ENCODE measurements at regions of chr4 and their contacts with region 1.

Region 1: GRCh38 chr4:75916091-75916661 is 13.9 kb upstream of the PPEF2 start:
- DNase-seq: peak in 4 of 5 donors; percentile 24 to 54 (median 30)
- H3K4me3 ChIP-seq: no peak overlapping the region
- H3K4me3 Mint-ChIP-seq: no peak overlapping the region
- H3K27ac ChIP-seq: no peak overlapping the region
- H3K27ac Mint-ChIP-seq: no peak overlapping the region
- H3K4me1 ChIP-seq: no peaks in the 10 kb centered on the region
- H3K4me1 Mint-ChIP-seq: no peaks in the 10 kb centered on the region
- H3K27me3 ChIP-seq: no peaks in the 10 kb centered on the region
- H3K27me3 Mint-ChIP-seq: no peaks in the 10 kb centered on the region

Region 2: DNA sequence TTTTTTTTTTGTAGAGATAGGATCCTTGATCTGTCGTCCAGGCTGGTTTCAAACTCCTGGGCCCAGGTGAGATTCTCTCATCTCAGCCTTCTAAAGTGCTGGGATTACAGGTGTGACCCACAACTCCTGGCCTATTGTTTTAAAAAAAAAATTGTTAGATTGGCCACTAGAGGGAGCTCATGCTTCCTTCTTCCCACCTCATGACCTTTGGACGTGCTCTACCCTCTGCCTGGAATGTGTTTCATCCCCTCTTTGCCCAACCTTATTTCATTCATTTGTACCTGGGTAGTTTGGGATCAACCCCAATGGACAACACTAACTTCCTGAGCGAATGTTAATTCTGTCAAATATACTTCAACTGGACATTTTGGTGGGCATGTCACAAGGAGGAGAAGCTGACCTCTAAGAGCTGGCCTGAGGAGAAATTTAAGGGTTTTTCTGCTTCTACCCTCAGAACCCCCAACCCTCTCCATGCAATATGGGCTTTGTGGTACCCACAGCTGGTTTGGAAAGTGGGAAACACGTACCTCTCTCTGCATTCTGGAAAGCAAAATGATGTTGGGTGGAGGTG is 20.3 kb before region 1 on chr4:
- CTCF ChIA-PET with region 1: interaction called, 20 read pairs
- POLR2A ChIA-PET with region 1: no interaction called
- intact Hi-C with region 1: no loop called
- DNase-seq: peak in 4 of 5 donors; percentile 26 to 49 (median 36)
- H3K4me3 ChIP-seq: no peak overlapping the region
- H3K4me3 Mint-ChIP-seq: no peak overlapping the region
- H3K27ac ChIP-seq: no peak overlapping the region
- H3K27ac Mint-ChIP-seq: no peak overlapping the region
- H3K4me1 ChIP-seq: no peaks in the 10 kb centered on the region
- H3K4me1 Mint-ChIP-seq: peaks cover 0 to 3% (median under 1%) of the 10 kb centered on the region in 4 donors
- H3K27me3 ChIP-seq: no peaks in the 10 kb centered on the region
- H3K27me3 Mint-ChIP-seq: no peaks in the 10 kb centered on the region

Region 3: DNA sequence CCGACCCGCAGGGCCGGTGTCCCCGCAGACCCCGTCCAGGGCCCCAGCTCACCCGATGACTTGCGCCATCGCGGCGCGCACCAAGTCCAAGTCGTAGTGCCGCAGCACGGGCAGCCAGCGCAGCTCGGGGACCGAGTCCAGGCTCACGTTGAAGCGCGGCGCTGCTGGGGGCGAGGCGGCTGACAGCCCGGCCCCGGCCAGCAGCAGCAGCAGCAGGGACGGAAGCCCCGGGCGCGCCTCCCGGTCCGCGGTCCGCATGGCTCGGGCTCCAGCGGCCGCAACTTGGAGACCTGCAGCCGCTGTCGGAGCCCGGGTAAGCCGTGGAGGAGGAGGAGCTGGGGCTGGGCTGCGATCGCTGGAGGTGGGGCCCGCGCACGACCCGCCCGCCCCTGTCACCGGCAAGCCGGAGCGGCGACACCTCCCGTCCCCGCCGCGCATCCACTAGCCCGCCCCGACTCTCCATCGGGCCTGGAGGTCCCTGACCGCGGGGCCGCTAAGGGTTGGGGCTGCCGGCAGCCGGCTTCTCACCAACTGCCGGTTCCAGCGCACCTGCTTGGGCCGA is 24.6 kb after region 1 on chr4 and contains the start of gene NAAA:
- CTCF ChIA-PET with region 1: interaction called, 20 read pairs
- POLR2A ChIA-PET with region 1: interaction called, 10 read pairs
- intact Hi-C with region 1: loop called (anchors 1 kb)
- DNase-seq: peak; percentile 73 to 84 (median 80)
- H3K4me3 ChIP-seq: peak within 1 kb of the TSS; percentile 80 to 98
- H3K4me3 Mint-ChIP-seq: peak within 1 kb of the TSS; percentile 97 to 99 (median 98)
- H3K27ac ChIP-seq: peak within 1 kb of the TSS; percentile 75
- H3K27ac Mint-ChIP-seq: peak within 1 kb of the TSS; percentile 96 to 98 (median 98)
- H3K4me1 ChIP-seq: peaks cover 19% of the 10 kb centered on the region
- H3K4me1 Mint-ChIP-seq: peaks cover 10 to 35% (median 19%) of the 10 kb centered on the region in 4 donors
- H3K27me3 ChIP-seq: no peaks in the 10 kb centered on the region
- H3K27me3 Mint-ChIP-seq: no peaks in the 10 kb centered on the region
- total RNA-seq, gene NAAA: 86.1 to 92.2 TPM

Region 4: DNA sequence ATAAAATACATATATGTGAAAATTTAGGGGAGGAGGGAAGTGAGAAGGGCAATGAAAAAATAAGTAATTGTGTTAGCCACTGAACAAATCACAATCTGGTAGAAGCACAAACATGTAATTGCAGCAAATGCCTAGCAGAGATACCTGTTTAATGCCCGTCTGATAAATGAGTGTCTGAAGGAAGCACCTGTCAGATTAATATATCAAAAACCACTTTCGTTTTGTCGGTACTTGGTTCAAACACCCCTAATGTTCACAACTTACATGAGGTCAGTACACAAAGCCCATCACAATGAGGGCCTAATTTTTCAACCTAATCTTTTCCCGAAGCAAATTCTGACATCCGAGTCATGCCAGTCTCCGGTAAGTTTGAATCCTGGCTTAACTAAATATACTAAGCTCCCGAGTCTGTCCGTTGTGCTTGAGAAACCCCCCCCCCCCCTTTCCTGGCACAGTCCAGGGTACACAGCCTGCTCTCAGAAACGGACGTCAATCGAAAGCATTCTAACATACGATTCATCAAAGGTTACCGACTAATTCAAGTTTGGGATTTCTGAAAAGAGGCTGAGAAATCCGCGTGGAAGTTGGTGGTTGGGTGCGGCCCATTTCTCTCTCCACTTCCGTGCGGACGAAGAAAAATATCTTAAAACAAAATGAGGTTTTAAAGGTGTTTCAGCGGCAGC is 73.8 kb after region 1 on chr4:
- CTCF ChIA-PET with region 1: interaction called, 8 read pairs
- POLR2A ChIA-PET with region 1: no interaction called
- intact Hi-C with region 1: loop called (anchors 5 kb)
- DNase-seq: peak in 4 of 5 donors; percentile 3 to 14 (median 8)
- H3K4me3 ChIP-seq: peak overlapping the region; percentile 84 to 93
- H3K4me3 Mint-ChIP-seq: peak overlapping the region; percentile 95 to 98 (median 96)
- H3K27ac ChIP-seq: peak overlapping the region; percentile 70
- H3K27ac Mint-ChIP-seq: peak overlapping the region; percentile 92 to 97 (median 95)
- H3K4me1 ChIP-seq: peaks cover 53% of the 10 kb centered on the region
- H3K4me1 Mint-ChIP-seq: peaks cover 0 to 34% (median 20%) of the 10 kb centered on the region in 4 donors
- H3K27me3 ChIP-seq: no peaks in the 10 kb centered on the region
- H3K27me3 Mint-ChIP-seq: peaks cover 0 to 5% of the 10 kb centered on the region in 2 donors

Region 5: GRCh38 chr4:76061982-76062381 is 145.8 kb after region 1 on chr4:
- CTCF ChIA-PET with region 1: interaction called, 16 read pairs
- POLR2A ChIA-PET with region 1: no interaction called
- intact Hi-C with region 1: loop called (anchors 1 kb)
- DNase-seq: no peak
- H3K4me3 ChIP-seq: no peak overlapping the region
- H3K4me3 Mint-ChIP-seq: no peak overlapping the region
- H3K27ac ChIP-seq: no peak overlapping the region
- H3K27ac Mint-ChIP-seq: no peak overlapping the region
- H3K4me1 ChIP-seq: no peaks in the 10 kb centered on the region
- H3K4me1 Mint-ChIP-seq: peaks cover 0 to 1% (median under 1%) of the 10 kb centered on the region in 4 donors
- H3K27me3 ChIP-seq: no peaks in the 10 kb centered on the region
- H3K27me3 Mint-ChIP-seq: no peaks in the 10 kb centered on the region

Region 6: GRCh38 chr4:76067652-76068286 is 151.6 kb after region 1 on chr4:
- CTCF ChIA-PET with region 1: interaction called, 16 read pairs
- POLR2A ChIA-PET with region 1: no interaction called
- intact Hi-C with region 1: loop called (anchors 1 kb)
- DNase-seq: peak; percentile 61 to 67 (median 62)
- H3K4me3 ChIP-seq: no peak overlapping the region
- H3K4me3 Mint-ChIP-seq: no peak overlapping the region
- H3K27ac ChIP-seq: no peak overlapping the region
- H3K27ac Mint-ChIP-seq: no peak overlapping the region
- H3K4me1 ChIP-seq: no peaks in the 10 kb centered on the region
- H3K4me1 Mint-ChIP-seq: no peaks in the 10 kb centered on the region
- H3K27me3 ChIP-seq: no peaks in the 10 kb centered on the region
- H3K27me3 Mint-ChIP-seq: no peaks in the 10 kb centered on the region

Region 7: DNA sequence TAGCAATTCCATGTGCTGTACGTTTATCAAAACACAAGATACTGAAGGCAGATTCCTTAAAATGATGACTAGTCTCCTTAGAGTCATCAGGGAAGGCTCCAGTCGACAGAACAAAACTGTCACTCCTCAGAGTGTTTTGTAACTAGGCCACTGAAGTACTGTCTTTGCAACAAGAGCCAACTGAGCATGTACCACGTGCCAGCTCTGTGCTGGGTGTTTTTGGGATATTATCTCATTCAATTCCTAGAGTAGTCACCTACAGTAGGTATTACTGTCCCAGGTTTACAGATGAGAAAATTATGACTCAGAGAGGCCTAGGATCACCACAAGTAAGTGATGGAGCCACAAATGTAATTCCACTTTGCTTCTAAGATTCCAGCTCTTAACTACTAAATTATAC is 250.3 kb after region 1 on chr4:
- CTCF ChIA-PET with region 1: no interaction called
- POLR2A ChIA-PET with region 1: no interaction called
- intact Hi-C with region 1: no loop called
- DNase-seq: no peak
- H3K4me3 ChIP-seq: no peak overlapping the region
- H3K4me3 Mint-ChIP-seq: no peak overlapping the region
- H3K27ac ChIP-seq: no peak overlapping the region
- H3K27ac Mint-ChIP-seq: no peak overlapping the region
- H3K4me1 ChIP-seq: no peaks in the 10 kb centered on the region
- H3K4me1 Mint-ChIP-seq: no peaks in the 10 kb centered on the region
- H3K27me3 ChIP-seq: no peaks in the 10 kb centered on the region
- H3K27me3 Mint-ChIP-seq: no peaks in the 10 kb centered on the region